CD14-positive monocyte (primary cell): ENCODE measurements at regions of chr3 and their contacts with region 1.

Region 1: DNA sequence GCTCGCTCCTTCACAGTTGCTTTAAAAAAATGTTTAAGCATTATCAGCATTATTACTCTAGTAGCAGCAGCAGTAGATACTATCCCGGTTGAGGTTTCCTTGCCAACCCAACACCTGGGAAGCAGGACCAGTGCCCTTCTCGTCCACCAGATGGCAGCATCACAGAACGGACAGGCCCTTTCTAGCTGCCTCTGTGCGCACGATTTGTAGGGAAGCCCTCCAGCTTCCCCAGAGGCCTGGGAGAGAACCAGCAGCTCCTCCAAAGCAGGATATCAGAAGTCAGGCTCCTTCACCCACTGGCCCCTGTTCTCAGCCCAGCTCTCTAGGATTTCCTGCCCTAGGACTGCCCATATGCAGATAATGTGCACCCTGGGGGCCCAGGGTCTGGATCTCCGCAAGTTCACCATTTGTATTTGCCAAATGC is 16.8 kb upstream of the ESYT3 start:
- DNase-seq: peak; percentile 57 to 66 (median 61)
- H3K4me3 ChIP-seq: no peak overlapping the region
- H3K4me3 Mint-ChIP-seq: no peak overlapping the region
- H3K27ac ChIP-seq: no peak overlapping the region
- H3K27ac Mint-ChIP-seq: peak overlapping the region in 1 of 7 donors; percentile 26
- H3K4me1 ChIP-seq: peaks cover 11 to 12% of the 10 kb centered on the region in 2 donors
- H3K4me1 Mint-ChIP-seq: peaks cover 11% of the 10 kb centered on the region
- H3K27me3 ChIP-seq: no peaks in the 10 kb centered on the region
- H3K27me3 Mint-ChIP-seq: peaks cover 3 to 9% (median 5%) of the 10 kb centered on the region in 3 donors
- CTCF ChIP-seq: peak; percentile 85

Region 2: GRCh38 chr3:138078901-138079344 is 338.6 kb before region 1 on chr3:
- intact Hi-C with region 1: loop called in 1 of 2 experiments (anchors 10 kb)
- DNase-seq: peak; percentile 53 to 91 (median 72)
- H3K4me3 ChIP-seq: no peak overlapping the region
- H3K4me3 Mint-ChIP-seq: peak overlapping the region in 1 of 2 donors; percentile 29
- H3K27ac ChIP-seq: peak overlapping the region in 1 of 2 donors; percentile 24
- H3K27ac Mint-ChIP-seq: peak overlapping the region; percentile 3 to 83 (median 75)
- H3K4me1 ChIP-seq: peaks cover 23 to 39% of the 10 kb centered on the region in 2 donors
- H3K4me1 Mint-ChIP-seq: peaks cover 28% of the 10 kb centered on the region
- H3K27me3 ChIP-seq: no peaks in the 10 kb centered on the region
- H3K27me3 Mint-ChIP-seq: peaks cover 0 to 3% (median 0%) of the 10 kb centered on the region in 3 donors
- CTCF ChIP-seq: no peak

Region 3: DNA sequence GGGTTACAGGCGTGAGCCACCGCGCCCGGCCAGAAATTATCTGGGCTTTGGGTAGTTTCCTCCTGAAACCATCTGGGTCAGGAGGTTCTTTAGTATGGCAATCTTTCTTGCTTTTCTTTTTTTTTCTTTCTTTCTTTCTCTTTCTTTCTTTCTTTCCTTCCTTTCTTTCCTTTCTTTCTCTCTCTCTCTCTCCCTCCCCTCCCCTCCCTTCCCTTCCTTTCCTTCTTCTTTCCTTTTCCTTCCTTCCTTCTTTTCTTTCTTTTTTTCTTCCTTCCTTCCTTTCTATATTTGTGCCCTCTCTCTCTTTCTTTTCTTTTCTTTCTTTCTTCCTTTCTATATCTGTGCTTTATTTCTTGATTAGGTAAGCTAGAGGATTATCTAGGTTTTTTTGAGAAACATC is 259.8 kb before region 1 on chr3:
- intact Hi-C with region 1: no loop called
- DNase-seq: no peak
- H3K4me3 ChIP-seq: no peak overlapping the region
- H3K4me3 Mint-ChIP-seq: peak overlapping the region in 1 of 2 donors; percentile 4
- H3K27ac ChIP-seq: no peak overlapping the region
- H3K27ac Mint-ChIP-seq: no peak overlapping the region
- H3K4me1 ChIP-seq: no peaks in the 10 kb centered on the region
- H3K4me1 Mint-ChIP-seq: peaks cover 1% of the 10 kb centered on the region
- H3K27me3 ChIP-seq: no peaks in the 10 kb centered on the region
- H3K27me3 Mint-ChIP-seq: peaks cover 0 to 4% (median 2%) of the 10 kb centered on the region in 3 donors
- CTCF ChIP-seq: no peak